ENCODE measurements at regions of chrX and their contacts with region 1.

Region 1: GRCh38 chrX:46758906-46759644 is at the start of gene SLC9A7:
- DNase-seq: peak; percentile 80
- H3K4me3 ChIP-seq: peak within 1 kb of the TSS; percentile 60 to 64
- H3K27ac ChIP-seq: peak within 1 kb of the TSS in 1 of 2 experiments; percentile 33; a peak in 2 of 4 replicates
- H3K4me1 ChIP-seq: peaks cover 6 to 9% of the 10 kb centered on the region in 2 experiments; a peak in 2 of 4 replicates
- H3K27me3 ChIP-seq: peaks cover 17% of the 10 kb centered on the region; the same call in 1 of the 2 replicates
- CTCF ChIP-seq: peak; percentile 77
- EP300 ChIP-seq: no peak
- RAD21 ChIP-seq: peak; percentile 78
- polyA plus RNA-seq, gene SLC9A7: 10.3 and 10.5 TPM in 2 replicates

Region 2: DNA sequence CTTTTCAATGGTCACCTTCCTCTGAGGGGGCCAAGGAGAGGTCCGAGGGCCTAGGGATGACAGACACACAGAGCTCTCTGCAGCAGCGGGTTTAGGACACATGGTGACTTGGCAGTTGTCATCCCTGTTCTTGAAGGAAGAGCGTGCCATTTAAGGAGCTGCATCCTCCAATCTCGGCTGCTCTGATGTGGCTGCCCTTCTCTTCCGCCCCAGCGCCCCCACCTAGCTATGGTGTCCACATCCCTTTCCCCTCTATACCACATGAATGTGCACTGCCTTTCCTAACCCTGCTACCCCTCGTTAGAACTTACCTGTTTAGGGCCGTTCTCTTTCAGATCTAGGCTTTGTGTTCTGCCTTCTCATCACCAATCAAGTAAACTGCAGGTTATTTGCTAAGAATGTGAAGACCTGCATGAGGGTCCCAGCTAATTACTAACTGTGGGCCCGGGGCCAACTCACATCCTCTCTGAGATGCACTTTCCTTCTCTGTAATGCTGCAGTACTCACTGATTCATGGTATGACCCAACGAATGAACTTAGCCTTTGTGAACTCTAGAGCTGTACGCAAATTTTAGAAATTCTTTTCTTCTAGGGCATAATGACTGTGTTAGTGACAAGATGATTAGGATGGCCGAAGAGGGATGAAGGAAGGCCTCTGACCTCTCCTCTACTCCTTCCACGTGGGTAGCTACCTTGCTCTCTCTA is 147.3 kb before region 1 on chrX:
- CTCF ChIA-PET with region 1: no interaction called
- POLR2A ChIA-PET with region 1: no interaction called
- DNase-seq: no peak
- H3K4me3 ChIP-seq: no peak overlapping the region
- H3K27ac ChIP-seq: no peak overlapping the region
- H3K4me1 ChIP-seq: no peaks in the 10 kb centered on the region
- H3K27me3 ChIP-seq: peaks cover 12% of the 10 kb centered on the region; the same call in 1 of the 2 replicates
- CTCF ChIP-seq: no peak
- EP300 ChIP-seq: no peak
- RAD21 ChIP-seq: no peak

Region 3: DNA sequence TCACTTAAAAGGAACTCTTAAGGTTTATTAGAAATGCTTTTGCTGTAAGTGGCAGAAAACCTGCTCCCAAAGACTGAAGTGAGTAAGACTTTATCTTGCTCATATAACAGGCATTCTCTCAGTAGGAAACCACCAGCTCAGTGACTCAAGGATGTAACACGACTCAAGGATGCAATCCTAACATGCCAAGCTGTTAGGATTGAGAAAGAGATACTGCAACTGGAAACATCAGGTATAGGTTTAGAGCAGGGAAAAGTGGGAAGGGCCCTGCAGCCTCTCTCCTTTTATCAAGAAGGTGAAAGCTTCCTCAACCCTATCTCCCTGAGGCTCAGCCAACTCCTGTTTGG is 11.7 kb after region 1 on chrX:
- CTCF ChIA-PET with region 1: interaction called, 12 read pairs
- POLR2A ChIA-PET with region 1: no interaction called
- DNase-seq: no peak
- H3K4me3 ChIP-seq: peak overlapping the region in 1 of 2 experiments; percentile 28; a peak in 3 of 4 replicates
- H3K27ac ChIP-seq: peak overlapping the region; percentile 48 to 94; a peak in 3 of 4 replicates
- H3K4me1 ChIP-seq: peaks cover 8 to 9% of the 10 kb centered on the region in 2 experiments
- H3K27me3 ChIP-seq: peaks cover 5% of the 10 kb centered on the region; the same call in 1 of the 2 replicates
- CTCF ChIP-seq: no peak
- EP300 ChIP-seq: peak in 1 of 2 experiments; percentile 47; a peak in 1 of 4 replicates
- RAD21 ChIP-seq: no peak

Measured in SK-N-SH (cell line).